ENCODE measurements at regions of chrX and their contacts with region 1.

Region 1: DNA sequence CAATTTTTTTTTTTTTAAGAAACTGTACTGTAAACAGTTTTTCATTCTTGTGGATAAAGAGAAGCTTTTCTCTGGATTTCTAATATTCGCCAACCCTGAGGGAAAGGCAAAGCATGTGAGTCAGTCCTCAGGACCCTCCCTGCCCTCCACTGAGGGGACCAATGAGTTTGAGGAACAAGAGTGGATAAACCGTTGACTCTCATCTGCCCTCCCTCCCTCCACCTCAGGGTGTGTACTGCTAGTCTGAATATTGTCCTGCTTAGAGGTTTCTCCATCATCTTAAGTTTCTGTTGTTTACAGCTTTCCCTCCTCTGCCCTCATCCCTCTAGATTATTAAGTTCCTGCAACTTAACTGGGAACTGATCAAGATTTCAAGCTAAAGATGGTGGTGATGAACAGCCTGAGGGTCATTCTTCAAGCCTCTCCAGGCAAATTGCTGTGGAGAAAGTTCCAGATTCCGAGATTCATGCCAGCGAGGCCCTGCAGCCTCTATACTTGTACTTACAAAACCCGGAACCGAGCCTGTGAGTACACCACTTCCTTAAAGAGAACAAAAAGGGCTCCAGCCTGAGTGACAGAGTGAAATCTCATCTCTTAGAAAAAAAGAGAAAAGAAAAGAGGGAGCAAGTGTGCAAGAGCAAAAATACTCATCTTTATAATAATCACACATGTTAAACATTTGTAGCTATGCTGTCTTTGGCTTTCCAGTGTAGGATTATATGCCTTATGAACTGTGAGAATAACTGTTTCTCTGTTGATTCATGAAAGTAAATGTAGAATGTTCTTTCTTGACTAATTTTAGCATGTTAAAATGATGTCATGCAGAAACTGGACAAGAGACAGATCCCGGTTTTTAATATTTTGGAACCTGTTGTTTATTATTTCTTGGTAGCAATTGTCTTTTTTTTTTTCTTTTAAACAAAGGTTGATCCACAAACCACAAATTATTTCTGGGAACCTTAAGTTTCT is 11.9 kb downstream of the CA5B start:
- DNase-seq: peak; percentile 51 to 63 (median 60)
- H3K4me3 ChIP-seq: peak overlapping the region in 1 of 2 donors; percentile 23
- H3K4me3 Mint-ChIP-seq: peak overlapping the region; percentile 77 to 92 (median 84)
- H3K27ac ChIP-seq: peak overlapping the region; percentile 97
- H3K27ac Mint-ChIP-seq: peak overlapping the region; percentile 91 to 100 (median 97)
- H3K4me1 ChIP-seq: peaks cover 74% of the 10 kb centered on the region
- H3K4me1 Mint-ChIP-seq: peaks cover 58 to 96% (median 83%) of the 10 kb centered on the region in 4 donors
- H3K27me3 ChIP-seq: no peaks in the 10 kb centered on the region
- H3K27me3 Mint-ChIP-seq: no peaks in the 10 kb centered on the region

Region 2: DNA sequence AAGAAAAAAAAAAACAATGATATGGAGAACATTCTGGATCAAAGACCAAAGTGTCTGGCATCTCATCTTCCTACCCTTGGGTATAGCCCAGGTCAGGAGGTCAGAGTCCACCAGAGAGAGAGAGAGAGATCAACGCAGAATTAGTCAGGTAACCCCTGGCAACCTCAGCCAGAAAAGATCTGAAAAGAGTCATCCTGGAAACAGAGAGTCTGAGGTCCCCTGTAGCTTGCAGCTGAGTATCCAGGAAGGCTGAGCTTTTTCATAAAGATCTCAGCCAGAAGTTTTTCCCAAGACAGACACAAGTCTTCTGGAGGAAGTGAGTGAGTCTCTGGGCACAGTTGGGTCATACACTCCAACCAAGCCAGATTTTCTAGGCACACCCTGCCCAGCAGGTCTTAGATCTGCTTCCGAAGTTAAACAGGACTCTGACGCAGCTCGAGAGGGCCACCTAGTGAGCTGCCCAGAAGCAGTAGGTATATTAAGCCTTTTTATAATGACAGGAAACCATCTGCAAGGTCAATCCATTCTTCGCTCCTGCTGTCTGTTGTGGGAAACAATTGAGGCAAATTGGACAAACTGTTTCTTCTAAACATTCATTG is 184.8 kb before region 1 on chrX:
- CTCF ChIA-PET with region 1: no interaction called
- POLR2A ChIA-PET with region 1: no interaction called
- intact Hi-C with region 1: no loop called
- DNase-seq: no peak
- H3K4me3 ChIP-seq: no peak overlapping the region
- H3K4me3 Mint-ChIP-seq: no peak overlapping the region
- H3K27ac ChIP-seq: no peak overlapping the region
- H3K27ac Mint-ChIP-seq: no peak overlapping the region
- H3K4me1 ChIP-seq: no peaks in the 10 kb centered on the region
- H3K4me1 Mint-ChIP-seq: peaks cover 0 to 2% (median 0%) of the 10 kb centered on the region in 4 donors
- H3K27me3 ChIP-seq: no peaks in the 10 kb centered on the region
- H3K27me3 Mint-ChIP-seq: peaks cover 10 to 11% of the 10 kb centered on the region in 2 donors

Region 3: DNA sequence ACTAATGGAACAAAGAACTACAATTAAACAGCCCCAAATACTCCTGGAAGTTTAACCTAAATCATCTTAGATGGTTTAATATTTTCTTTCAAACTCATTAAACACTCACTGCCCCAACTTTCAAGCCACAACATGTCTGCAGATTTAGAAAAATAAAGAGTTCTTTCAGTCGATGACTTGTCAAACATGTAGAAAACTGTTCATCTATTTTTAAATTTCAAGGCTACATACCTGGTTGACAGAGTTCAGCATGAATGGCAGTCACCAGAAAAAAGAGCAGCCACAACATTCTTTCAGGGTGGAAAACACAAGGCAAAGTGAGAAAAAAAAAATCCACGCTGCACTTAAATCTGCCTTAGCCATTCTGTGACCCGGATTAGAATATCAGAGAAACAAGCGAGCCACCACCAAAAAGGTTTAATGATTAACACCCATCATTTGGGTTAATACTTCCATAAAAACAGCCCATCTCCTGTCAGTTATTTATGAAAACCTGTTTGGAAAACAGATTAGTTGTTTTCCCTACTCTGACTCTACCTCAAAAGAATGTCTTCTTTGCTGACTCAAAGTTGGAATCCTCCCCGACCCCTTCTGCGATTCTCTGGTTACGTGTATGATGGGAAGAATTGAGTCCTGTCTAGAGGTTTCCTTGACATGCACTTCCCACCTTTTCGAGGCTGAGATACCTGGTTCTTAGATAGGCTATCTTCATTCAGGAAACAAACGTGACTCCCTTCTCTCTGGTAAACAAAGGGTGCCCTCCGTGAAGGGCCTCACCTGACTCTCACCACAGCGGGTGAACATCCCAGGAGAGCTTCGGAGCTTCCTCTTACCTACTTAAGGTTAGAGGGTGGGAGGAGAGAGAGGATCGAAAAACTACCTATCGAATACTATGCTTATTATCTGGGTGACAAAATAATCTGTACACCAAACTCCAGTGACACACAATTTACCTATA is 85.2 kb before region 1 on chrX and contains the start of gene CLTRN:
- CTCF ChIA-PET with region 1: no interaction called
- POLR2A ChIA-PET with region 1: no interaction called
- intact Hi-C with region 1: no loop called
- DNase-seq: no peak
- H3K4me3 ChIP-seq: no peak within 1 kb of the TSS
- H3K4me3 Mint-ChIP-seq: no peak within 1 kb of the TSS
- H3K27ac ChIP-seq: no peak within 1 kb of the TSS
- H3K27ac Mint-ChIP-seq: no peak within 1 kb of the TSS
- H3K4me1 ChIP-seq: no peaks in the 10 kb centered on the region
- H3K4me1 Mint-ChIP-seq: no peaks in the 10 kb centered on the region
- H3K27me3 ChIP-seq: no peaks in the 10 kb centered on the region
- H3K27me3 Mint-ChIP-seq: peaks cover 12 to 17% of the 10 kb centered on the region in 2 donors
- total RNA-seq, gene CLTRN: 0.33 TPM in 1 of 2 experiments, not detected in the other

Region 4: DNA sequence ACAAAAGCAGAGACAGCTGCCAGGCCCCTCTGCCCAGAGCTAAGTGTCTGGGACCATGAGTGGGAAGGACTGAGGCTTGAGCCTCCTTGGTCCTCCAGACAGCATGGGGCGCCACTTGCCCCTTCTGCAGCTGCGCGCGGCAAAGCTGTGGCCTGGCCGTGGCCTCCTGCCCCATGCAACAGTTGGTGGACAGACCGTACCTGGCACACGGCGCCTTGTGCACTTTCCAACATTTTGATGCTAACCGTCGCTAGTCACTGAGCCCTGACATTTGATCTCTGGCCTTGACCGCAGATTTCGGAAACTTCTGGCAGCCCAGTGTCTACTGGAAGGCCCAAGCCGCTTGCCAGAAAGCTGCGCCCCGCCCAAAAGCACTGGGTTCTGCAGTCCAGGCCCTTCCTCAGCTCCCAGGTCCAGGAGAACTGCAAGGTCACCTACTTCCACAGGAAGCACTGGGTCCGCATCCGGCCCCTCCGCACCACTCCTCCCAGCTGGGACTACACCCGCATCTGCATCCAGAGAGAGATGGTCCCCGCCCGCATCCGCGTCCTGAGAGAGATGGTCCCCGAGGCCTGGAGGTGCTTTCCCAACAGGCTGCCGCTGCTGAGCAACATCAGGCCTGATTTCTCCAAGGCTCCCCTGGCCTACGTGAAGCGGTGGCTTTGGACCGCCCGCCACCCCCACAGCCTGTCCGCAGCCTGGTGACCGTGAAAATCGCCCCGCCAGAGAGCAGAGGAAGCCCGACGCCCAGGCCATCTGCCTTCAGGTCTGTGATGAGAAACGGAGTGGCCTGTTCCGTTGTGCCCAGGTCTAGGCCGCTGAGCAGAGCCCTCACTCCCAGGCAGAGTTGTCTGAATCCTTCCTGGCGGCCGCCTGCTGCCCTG is 47.2 kb before region 1 on chrX:
- CTCF ChIA-PET with region 1: no interaction called
- POLR2A ChIA-PET with region 1: no interaction called
- intact Hi-C with region 1: no loop called
- DNase-seq: no peak
- H3K4me3 ChIP-seq: no peak overlapping the region
- H3K4me3 Mint-ChIP-seq: no peak overlapping the region
- H3K27ac ChIP-seq: no peak overlapping the region
- H3K27ac Mint-ChIP-seq: no peak overlapping the region
- H3K4me1 ChIP-seq: no peaks in the 10 kb centered on the region
- H3K4me1 Mint-ChIP-seq: peaks cover 0 to 4% (median 2%) of the 10 kb centered on the region in 4 donors
- H3K27me3 ChIP-seq: no peaks in the 10 kb centered on the region
- H3K27me3 Mint-ChIP-seq: no peaks in the 10 kb centered on the region

Region 5: DNA sequence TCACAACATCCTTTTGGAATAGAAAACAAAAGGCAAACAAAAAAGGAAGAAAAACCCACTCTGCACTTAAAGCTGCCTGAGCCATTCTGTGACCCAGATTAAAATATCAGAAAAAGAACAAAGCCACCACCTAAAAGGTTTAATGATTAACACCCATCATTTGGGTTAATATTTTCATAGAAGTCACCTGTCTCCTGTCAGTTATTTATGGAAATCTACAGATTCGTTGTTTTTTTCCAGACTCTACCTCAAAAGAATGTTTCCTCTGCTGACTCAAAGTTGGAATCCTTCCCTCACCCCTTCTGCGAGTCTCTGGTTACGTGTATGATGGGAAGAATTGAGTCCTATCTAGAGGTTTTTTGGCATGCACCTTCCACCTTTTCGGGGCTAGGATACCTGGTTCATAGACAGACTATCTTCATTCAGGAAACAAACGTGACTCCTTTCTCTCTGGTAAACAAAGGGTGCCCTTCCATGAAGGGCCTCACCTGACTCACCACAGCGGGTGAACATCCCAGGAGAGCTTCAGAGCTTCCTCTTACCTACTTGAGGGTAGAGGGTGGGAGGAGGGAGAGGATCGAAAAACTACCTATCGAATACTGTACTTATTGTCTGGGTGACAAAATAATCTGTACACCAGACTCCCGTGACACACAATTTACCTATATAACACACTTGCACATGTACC is 31.5 kb before region 1 on chrX:
- CTCF ChIA-PET with region 1: no interaction called
- POLR2A ChIA-PET with region 1: interaction called, 3 read pairs
- intact Hi-C with region 1: loop called (anchors 5 kb)
- DNase-seq: no peak
- H3K4me3 ChIP-seq: no peak overlapping the region
- H3K4me3 Mint-ChIP-seq: no peak overlapping the region
- H3K27ac ChIP-seq: no peak overlapping the region
- H3K27ac Mint-ChIP-seq: peak overlapping the region in 1 of 7 donors; percentile 65
- H3K4me1 ChIP-seq: no peaks in the 10 kb centered on the region
- H3K4me1 Mint-ChIP-seq: peaks cover 0 to 11% (median 5%) of the 10 kb centered on the region in 4 donors
- H3K27me3 ChIP-seq: no peaks in the 10 kb centered on the region
- H3K27me3 Mint-ChIP-seq: no peaks in the 10 kb centered on the region

Region 6: GRCh38 chrX:15737960-15738902 is 11.7 kb before region 1 on chrX and contains the start of gene CA5B:
- CTCF ChIA-PET with region 1: interaction called, 33 read pairs
- POLR2A ChIA-PET with region 1: interaction called, 294 read pairs
- intact Hi-C with region 1: loop called (anchors 1 kb)
- DNase-seq: peak; percentile 95 to 100 (median 99)
- H3K4me3 ChIP-seq: peak within 1 kb of the TSS; percentile 57 to 81
- H3K4me3 Mint-ChIP-seq: peak within 1 kb of the TSS; percentile 94 to 99 (median 97)
- H3K27ac ChIP-seq: peak within 1 kb of the TSS; percentile 87
- H3K27ac Mint-ChIP-seq: peak within 1 kb of the TSS; percentile 93 to 99 (median 97)
- H3K4me1 ChIP-seq: peaks cover 40% of the 10 kb centered on the region
- H3K4me1 Mint-ChIP-seq: peaks cover 30 to 57% (median 45%) of the 10 kb centered on the region in 4 donors
- H3K27me3 ChIP-seq: no peaks in the 10 kb centered on the region
- H3K27me3 Mint-ChIP-seq: no peaks in the 10 kb centered on the region
- total RNA-seq, gene CA5B: 45.7 to 54.5 TPM

Region 7: GRCh38 chrX:15789979-15790768 is 40.2 kb after region 1 on chrX and contains the start of gene ZRSR2:
- CTCF ChIA-PET with region 1: no interaction called
- POLR2A ChIA-PET with region 1: interaction called, 34 read pairs
- intact Hi-C with region 1: loop called (anchors 1 kb)
- DNase-seq: peak; percentile 91 to 95 (median 94)
- H3K4me3 ChIP-seq: peak within 1 kb of the TSS; percentile 65 to 76
- H3K4me3 Mint-ChIP-seq: peak within 1 kb of the TSS in 1 of 8 donors; percentile 18
- H3K27ac ChIP-seq: peak within 1 kb of the TSS; percentile 83
- H3K27ac Mint-ChIP-seq: peak within 1 kb of the TSS in 1 of 7 donors; percentile 68
- H3K4me1 ChIP-seq: peaks cover 37% of the 10 kb centered on the region
- H3K4me1 Mint-ChIP-seq: peaks cover 13 to 35% (median 24%) of the 10 kb centered on the region in 4 donors
- H3K27me3 ChIP-seq: no peaks in the 10 kb centered on the region
- H3K27me3 Mint-ChIP-seq: no peaks in the 10 kb centered on the region
- total RNA-seq, gene ZRSR2: 30.1 to 30.7 TPM

Region 8: GRCh38 chrX:16119353-16120220 is 369.7 kb after region 1 on chrX:
- CTCF ChIA-PET with region 1: no interaction called
- POLR2A ChIA-PET with region 1: no interaction called
- intact Hi-C with region 1: no loop called
- DNase-seq: no peak
- H3K4me3 ChIP-seq: no peak overlapping the region
- H3K4me3 Mint-ChIP-seq: peak overlapping the region in 1 of 8 donors; percentile 10
- H3K27ac ChIP-seq: no peak overlapping the region
- H3K27ac Mint-ChIP-seq: no peak overlapping the region
- H3K4me1 ChIP-seq: no peaks in the 10 kb centered on the region
- H3K4me1 Mint-ChIP-seq: peaks cover 4 to 11% (median 7%) of the 10 kb centered on the region in 4 donors
- H3K27me3 ChIP-seq: no peaks in the 10 kb centered on the region
- H3K27me3 Mint-ChIP-seq: peaks cover 1 to 5% of the 10 kb centered on the region in 2 donors

Region 9: GRCh38 chrX:16719334-16720084 is 969.6 kb after region 1 on chrX and contains the start of gene SYAP1:
- CTCF ChIA-PET with region 1: no interaction called
- POLR2A ChIA-PET with region 1: interaction called, 3 read pairs
- intact Hi-C with region 1: loop called (anchors 5 kb)
- DNase-seq: peak; percentile 91 to 100 (median 97)
- H3K4me3 ChIP-seq: peak within 1 kb of the TSS; percentile 54 to 84
- H3K4me3 Mint-ChIP-seq: peak within 1 kb of the TSS; percentile 89 to 99 (median 95)
- H3K27ac ChIP-seq: peak within 1 kb of the TSS; percentile 95
- H3K27ac Mint-ChIP-seq: peak within 1 kb of the TSS; percentile 99 to 100 (median 99)
- H3K4me1 ChIP-seq: peaks cover 8% of the 10 kb centered on the region
- H3K4me1 Mint-ChIP-seq: peaks cover 13 to 55% (median 37%) of the 10 kb centered on the region in 4 donors
- H3K27me3 ChIP-seq: no peaks in the 10 kb centered on the region
- H3K27me3 Mint-ChIP-seq: no peaks in the 10 kb centered on the region
- total RNA-seq, gene SYAP1: 13.9 to 15.4 TPM

Measured in CD4-positive, alpha-beta memory T cell (primary cell).